IMR-90 (cell line): ENCODE measurements at regions of chr16 and their contacts with region 1.

Region 1: GRCh38 chr16:30526823-30527635 is 663 bp upstream of the ZNF768 start:
- DNase-seq: peak; percentile 96
- ATAC-seq: peak; percentile 91
- H3K4me3 ChIP-seq: peak overlapping the region; percentile 85
- H3K27ac ChIP-seq: peak overlapping the region; percentile 97
- H3K4me1 ChIP-seq: peaks cover 5% of the 10 kb centered on the region
- H3K27me3 ChIP-seq: no peaks in the 10 kb centered on the region
- CTCF ChIP-seq: peak; percentile 14; the same call in 1 of the 2 replicates
- POLR2A ChIP-seq: peak; percentile 43; the same call in 1 of the 2 replicates
- RAD21 ChIP-seq: 0 out of 2 replicates have a peak, but pooled peaks have one; percentile 22

Region 2: DNA sequence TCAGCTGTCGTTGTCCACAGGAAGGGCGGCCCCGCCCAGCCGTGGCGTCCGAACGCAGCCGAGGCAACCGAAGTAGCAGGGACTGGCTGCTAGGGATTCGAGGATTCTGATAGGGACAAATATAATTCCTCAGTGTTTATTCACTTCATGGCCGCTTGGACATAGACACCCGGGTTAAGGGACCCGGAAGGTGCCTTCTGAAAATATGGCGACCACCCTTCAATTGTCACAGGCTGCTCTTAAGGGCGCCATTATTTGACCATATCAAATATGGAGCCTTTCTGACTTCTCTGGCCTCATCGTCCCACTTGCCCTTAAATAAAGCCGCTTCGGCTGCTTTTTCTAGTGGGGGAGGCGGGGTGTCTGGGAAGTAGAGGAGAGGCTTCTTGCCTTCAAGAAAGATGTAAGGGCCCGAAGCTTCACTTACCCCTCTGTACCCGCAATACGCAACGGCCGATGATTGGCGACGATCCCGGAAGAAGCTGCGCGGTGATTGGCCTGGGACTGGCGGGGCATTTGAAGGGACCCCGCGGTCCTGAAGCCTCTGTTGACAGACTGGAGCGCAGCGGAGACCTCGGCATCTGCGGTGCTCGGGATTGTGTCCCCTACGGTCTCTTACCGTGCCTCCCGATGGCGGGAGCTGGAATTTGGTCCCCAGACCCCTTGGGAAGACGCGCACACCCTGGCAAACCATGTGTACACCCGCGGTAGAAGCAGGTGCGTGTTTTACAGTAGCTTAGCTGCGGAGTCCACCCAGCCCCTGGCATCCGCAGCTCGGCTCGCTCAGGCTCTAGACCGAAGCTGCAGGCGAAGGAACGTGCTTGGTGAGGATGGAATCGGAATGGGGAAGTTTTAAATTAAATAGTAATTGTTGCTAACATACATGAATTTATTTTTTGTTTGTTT is 44.9 kb after region 1 on chr16 and contains the start of gene ZNF688:
- CTCF ChIA-PET with region 1: no interaction called
- POLR2A ChIA-PET with region 1: no interaction called
- dilution Hi-C with region 1: no loop called
- in situ Hi-C with region 1: no loop called
- intact Hi-C with region 1: loop called (anchors 1 kb)
- DNase-seq: peak; percentile 96
- ATAC-seq: peak; percentile 90
- H3K4me3 ChIP-seq: peak within 1 kb of the TSS; percentile 57
- H3K27ac ChIP-seq: peak within 1 kb of the TSS; percentile 89
- H3K4me1 ChIP-seq: peaks cover 9% of the 10 kb centered on the region
- H3K27me3 ChIP-seq: no peaks in the 10 kb centered on the region
- CTCF ChIP-seq: no peak
- POLR2A ChIP-seq: no peak
- RAD21 ChIP-seq: no peak
- total RNA-seq, gene ZNF688: 1.7 and 1.8 TPM in 2 replicates

Region 3: GRCh38 chr16:30650369-30651123 is 123.5 kb after region 1 on chr16 and contains the start of gene PRR14:
- CTCF ChIA-PET with region 1: no interaction called
- POLR2A ChIA-PET with region 1: no interaction called
- dilution Hi-C with region 1: no loop called
- in situ Hi-C with region 1: no loop called
- intact Hi-C with region 1: loop called (anchors 2 kb)
- DNase-seq: peak; percentile 99
- ATAC-seq: peak; percentile 89
- H3K4me3 ChIP-seq: peak within 1 kb of the TSS; percentile 84
- H3K27ac ChIP-seq: peak within 1 kb of the TSS; percentile 73
- H3K4me1 ChIP-seq: peaks cover 6% of the 10 kb centered on the region; the same call in 1 of the 2 replicates
- H3K27me3 ChIP-seq: no peaks in the 10 kb centered on the region
- CTCF ChIP-seq: peak; percentile 27
- POLR2A ChIP-seq: no peak; the same call in 1 of the 2 replicates
- RAD21 ChIP-seq: no peak
- total RNA-seq, gene PRR14: 1.4 and 2.2 TPM in 2 replicates

Region 4: DNA sequence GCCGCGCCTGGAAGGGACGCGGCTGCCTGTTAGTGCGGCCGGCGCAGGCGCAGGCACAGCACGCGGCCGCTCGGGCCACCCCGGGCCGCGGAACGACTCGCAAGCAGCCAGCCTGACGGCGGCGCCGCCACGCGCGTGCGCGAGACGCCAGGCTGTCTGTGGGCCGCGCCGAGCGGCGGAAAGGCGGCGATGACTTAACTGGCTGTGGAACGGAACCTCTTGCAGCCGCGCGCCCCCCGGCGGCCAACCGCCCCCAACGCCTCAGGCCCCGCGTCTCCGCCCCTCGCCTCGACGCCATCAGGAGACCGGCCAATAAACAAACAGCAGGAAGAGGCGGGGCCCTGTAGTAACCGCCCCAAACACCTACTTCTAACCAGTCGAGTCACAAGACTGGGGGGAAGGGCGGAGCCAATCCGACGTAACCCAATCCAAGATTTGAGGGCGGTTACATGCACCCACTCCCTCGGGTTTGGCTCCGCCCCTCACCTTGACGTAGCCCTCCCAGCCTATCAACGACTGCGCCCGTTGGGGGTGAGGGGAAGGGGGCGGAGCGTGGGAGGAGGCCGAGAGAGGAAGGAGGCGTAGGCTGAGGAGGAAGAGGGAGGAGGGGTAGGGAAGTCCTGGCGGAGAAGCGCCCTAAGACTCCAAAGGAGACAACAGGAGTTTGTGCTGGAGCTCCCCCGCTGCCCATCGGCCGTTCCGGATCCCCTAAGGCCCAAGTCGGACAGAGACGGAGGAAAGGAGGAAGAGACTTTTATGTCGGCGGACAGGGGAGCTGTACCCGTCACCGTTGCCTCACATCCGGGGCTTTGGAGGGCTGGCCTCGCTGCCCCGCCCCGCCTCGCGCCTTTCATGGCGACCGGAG is 131.1 kb after region 1 on chr16 and contains the start of gene FBRS:
- CTCF ChIA-PET with region 1: no interaction called
- POLR2A ChIA-PET with region 1: no interaction called
- dilution Hi-C with region 1: no loop called
- in situ Hi-C with region 1: no loop called
- intact Hi-C with region 1: loop called (anchors 2 kb)
- DNase-seq: peak; percentile 100
- ATAC-seq: peak; percentile 83
- H3K4me3 ChIP-seq: peak within 1 kb of the TSS; percentile 62
- H3K27ac ChIP-seq: peak within 1 kb of the TSS; percentile 92
- H3K4me1 ChIP-seq: peaks cover 12% of the 10 kb centered on the region; the same call in 1 of the 2 replicates
- H3K27me3 ChIP-seq: no peaks in the 10 kb centered on the region
- CTCF ChIP-seq: peak; percentile 98
- POLR2A ChIP-seq: peak; percentile 91
- RAD21 ChIP-seq: peak; percentile 69
- total RNA-seq, gene FBRS: 2.0 and 2.8 TPM in 2 replicates